ENCODE measurements at regions of chr2 and their contacts with region 1.

Region 1: DNA sequence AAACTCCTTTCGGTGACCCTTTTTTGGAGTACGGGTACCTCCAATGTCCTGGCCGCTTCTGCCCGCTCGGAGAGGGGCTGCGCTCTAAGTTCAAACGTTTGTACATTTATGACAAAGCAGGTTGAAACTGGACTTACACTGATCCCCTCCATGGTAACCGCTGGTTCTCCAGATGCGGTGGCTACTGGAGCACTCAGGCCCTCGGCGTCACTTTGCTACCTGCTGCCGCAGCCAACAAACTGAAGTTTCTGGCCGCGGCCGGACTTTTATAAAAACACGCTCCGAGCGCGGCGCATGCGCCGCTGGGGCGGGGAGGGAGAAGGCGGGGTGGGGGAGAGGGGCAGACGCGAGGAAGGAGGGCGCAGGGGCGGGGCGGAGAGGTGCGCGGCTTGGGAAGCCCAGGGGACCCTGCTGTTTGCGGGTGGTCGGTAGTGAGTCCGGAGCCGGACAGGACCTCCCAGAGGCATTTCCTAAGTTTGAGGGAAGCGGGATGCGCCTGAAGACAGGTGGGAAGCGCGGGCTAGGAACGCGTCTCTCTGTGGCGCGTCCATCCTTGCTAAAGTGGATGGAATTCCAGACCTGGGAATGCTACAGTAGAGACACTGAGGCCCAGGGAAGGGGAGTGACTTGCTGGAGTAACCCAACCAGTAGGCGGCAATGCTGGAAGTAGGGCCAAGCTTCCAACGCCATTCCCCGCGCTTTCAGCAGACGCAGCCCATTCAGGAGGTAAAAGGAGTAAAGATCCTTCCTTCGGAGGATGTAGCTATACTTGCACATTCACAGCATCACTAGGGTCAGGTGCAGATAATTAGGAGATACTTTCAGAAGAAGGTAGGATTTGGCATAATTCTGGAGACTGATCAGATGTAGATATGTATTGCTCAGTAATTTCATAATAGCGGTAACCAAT is at the start of gene CXCR4:
- DNase-seq: peak; percentile 74
- H3K4me3 ChIP-seq: peak within 1 kb of the TSS; percentile 72
- H3K27ac ChIP-seq: peak within 1 kb of the TSS; percentile 58
- H3K4me1 ChIP-seq: peaks cover 41% of the 10 kb centered on the region
- H3K27me3 ChIP-seq: peaks cover 94% of the 10 kb centered on the region
- CTCF ChIP-seq: peak; percentile 35
- total RNA-seq, gene CXCR4: 3.2 TPM

Region 2: GRCh38 chr2:136025057-136025973 is 92.8 kb before region 1 on chr2:
- intact Hi-C with region 1: loop called (anchors 10 kb)
- DNase-seq: peak; percentile 77
- H3K4me3 ChIP-seq: peak overlapping the region; percentile 47
- H3K27ac ChIP-seq: peak overlapping the region; percentile 45
- H3K4me1 ChIP-seq: peaks cover 14% of the 10 kb centered on the region
- H3K27me3 ChIP-seq: no peaks in the 10 kb centered on the region
- CTCF ChIP-seq: no peak

Measured in left ventricle myocardium inferior (tissue), 1 donor.